Endothelial cell of umbilical vein (primary cell): ENCODE measurements at regions of chr18 and their contacts with region 1.

Region 1: GRCh38 chr18:76492669-76493212 is 2.3 kb downstream of the ZNF516 start:
- DNase-seq: peak; percentile 98
- H3K4me3 ChIP-seq: peak overlapping the region; percentile 80 to 97 (median 97)
- H3K27ac ChIP-seq: peak overlapping the region; percentile 60
- H3K4me1 ChIP-seq: peaks cover 25% of the 10 kb centered on the region
- H3K27me3 ChIP-seq: peaks cover 9 to 10% of the 10 kb centered on the region in 2 experiments
- CTCF ChIP-seq: no peak
- POLR2A ChIP-seq: peak; percentile 20

Region 2: GRCh38 chr18:74597662-74598349 is 1894.9 kb before region 1 on chr18 and contains the start of gene ZNF407:
- CTCF ChIA-PET with region 1: no interaction called
- POLR2A ChIA-PET with region 1: no interaction called
- dilution Hi-C with region 1: no loop called
- intact Hi-C with region 1: loop called (anchors 2 kb)
- DNase-seq: peak; percentile 91
- H3K4me3 ChIP-seq: peak within 1 kb of the TSS; percentile 88 to 98 (median 97)
- H3K27ac ChIP-seq: peak within 1 kb of the TSS; percentile 99
- H3K4me1 ChIP-seq: peaks cover 15% of the 10 kb centered on the region
- H3K27me3 ChIP-seq: no peaks in the 10 kb centered on the region
- CTCF ChIP-seq: no peak
- POLR2A ChIP-seq: peak; percentile 6
- total RNA-seq, gene ZNF407: 17.3 and 20.1 TPM in 2 replicates

Region 3: GRCh38 chr18:76374330-76375281 is 118.1 kb before region 1 on chr18:
- CTCF ChIA-PET with region 1: no interaction called
- POLR2A ChIA-PET with region 1: no interaction called
- dilution Hi-C with region 1: no loop called
- intact Hi-C with region 1: no loop called
- DNase-seq: no peak
- H3K4me3 ChIP-seq: no peak overlapping the region
- H3K27ac ChIP-seq: no peak overlapping the region
- H3K4me1 ChIP-seq: no peaks in the 10 kb centered on the region
- H3K27me3 ChIP-seq: no peaks in the 10 kb centered on the region
- CTCF ChIP-seq: no peak
- POLR2A ChIP-seq: no peak

Region 4: GRCh38 chr18:76405681-76406356 is 86.9 kb before region 1 on chr18:
- CTCF ChIA-PET with region 1: no interaction called
- POLR2A ChIA-PET with region 1: no interaction called
- dilution Hi-C with region 1: no loop called
- intact Hi-C with region 1: loop called (anchors 1 kb)
- DNase-seq: peak; percentile 34
- H3K4me3 ChIP-seq: no peak overlapping the region
- H3K27ac ChIP-seq: no peak overlapping the region
- H3K4me1 ChIP-seq: no peaks in the 10 kb centered on the region
- H3K27me3 ChIP-seq: no peaks in the 10 kb centered on the region
- CTCF ChIP-seq: peak; percentile 37 to 51
- POLR2A ChIP-seq: no peak

Region 5: GRCh38 chr18:76450452-76451395 is 42.0 kb before region 1 on chr18:
- CTCF ChIA-PET with region 1: interaction called, 3 read pairs
- POLR2A ChIA-PET with region 1: interaction called, 3 read pairs
- dilution Hi-C with region 1: no loop called
- intact Hi-C with region 1: loop called (anchors 1 kb)
- DNase-seq: peak; percentile 72
- H3K4me3 ChIP-seq: peak overlapping the region; percentile 51 to 88 (median 56)
- H3K27ac ChIP-seq: peak overlapping the region; percentile 94
- H3K4me1 ChIP-seq: peaks cover 20% of the 10 kb centered on the region
- H3K27me3 ChIP-seq: peaks cover 0 to 1% of the 10 kb centered on the region in 2 experiments
- CTCF ChIP-seq: no peak
- POLR2A ChIP-seq: no peak

Region 6: GRCh38 chr18:76518123-76518859 is 25.6 kb after region 1 on chr18:
- CTCF ChIA-PET with region 1: no interaction called
- POLR2A ChIA-PET with region 1: no interaction called
- dilution Hi-C with region 1: no loop called
- intact Hi-C with region 1: loop called (anchors 1 kb)
- DNase-seq: peak; percentile 30
- H3K4me3 ChIP-seq: peak overlapping the region; percentile 13 to 62 (median 25)
- H3K27ac ChIP-seq: no peak overlapping the region
- H3K4me1 ChIP-seq: peaks cover 3% of the 10 kb centered on the region
- H3K27me3 ChIP-seq: peaks cover 15 to 18% of the 10 kb centered on the region in 2 experiments
- CTCF ChIP-seq: no peak
- POLR2A ChIP-seq: no peak

Region 7: GRCh38 chr18:76697441-76697901 is 204.7 kb after region 1 on chr18:
- CTCF ChIA-PET with region 1: no interaction called
- POLR2A ChIA-PET with region 1: no interaction called
- dilution Hi-C with region 1: no loop called
- intact Hi-C with region 1: loop called (anchors 5 kb)
- DNase-seq: peak; percentile 47
- H3K4me3 ChIP-seq: peak overlapping the region; percentile 16 to 58 (median 23)
- H3K27ac ChIP-seq: peak overlapping the region; percentile 52
- H3K4me1 ChIP-seq: peaks cover 12% of the 10 kb centered on the region
- H3K27me3 ChIP-seq: no peaks in the 10 kb centered on the region
- CTCF ChIP-seq: no peak
- POLR2A ChIP-seq: no peak

Region 8: GRCh38 chr18:76822510-76823160 is 329.9 kb after region 1 on chr18 and contains the start of gene ZNF236:
- CTCF ChIA-PET with region 1: no interaction called
- POLR2A ChIA-PET with region 1: no interaction called
- dilution Hi-C with region 1: no loop called
- intact Hi-C with region 1: loop called (anchors 2 kb)
- DNase-seq: peak; percentile 44
- H3K4me3 ChIP-seq: peak within 1 kb of the TSS; percentile 54 to 98 (median 75)
- H3K27ac ChIP-seq: peak within 1 kb of the TSS; percentile 63
- H3K4me1 ChIP-seq: peaks cover 25% of the 10 kb centered on the region
- H3K27me3 ChIP-seq: no peaks in the 10 kb centered on the region
- CTCF ChIP-seq: no peak
- POLR2A ChIP-seq: peak; percentile 73
- total RNA-seq, gene ZNF236: 13.6 and 14.7 TPM in 2 replicates

Region 9: DNA sequence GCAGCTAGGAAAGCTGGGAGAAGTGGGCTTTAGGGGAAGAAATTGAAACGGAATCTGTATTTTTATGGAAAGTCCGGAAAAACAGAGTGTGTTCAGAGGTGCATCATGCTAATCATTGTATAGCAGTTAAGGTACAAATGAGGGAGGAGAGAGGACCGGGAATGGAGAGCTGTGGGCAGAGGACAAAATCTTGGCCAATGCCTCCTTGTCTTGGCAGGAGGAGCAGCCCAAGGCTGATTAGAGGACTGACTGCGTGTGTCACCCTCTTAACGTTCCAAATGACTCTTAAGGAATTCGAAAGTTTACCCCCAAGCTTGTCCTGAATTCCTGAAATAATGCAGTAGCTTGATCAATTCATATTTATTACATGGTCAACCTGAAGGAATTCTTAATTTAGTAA is 410.6 kb after region 1 on chr18:
- CTCF ChIA-PET with region 1: no interaction called
- POLR2A ChIA-PET with region 1: no interaction called
- dilution Hi-C with region 1: no loop called
- intact Hi-C with region 1: no loop called
- DNase-seq: no peak
- H3K4me3 ChIP-seq: no peak overlapping the region
- H3K27ac ChIP-seq: no peak overlapping the region
- H3K4me1 ChIP-seq: no peaks in the 10 kb centered on the region
- H3K27me3 ChIP-seq: no peaks in the 10 kb centered on the region
- CTCF ChIP-seq: no peak
- POLR2A ChIP-seq: no peak